ENCODE measurements at regions of chr12 and their contacts with region 1.

Region 1: DNA sequence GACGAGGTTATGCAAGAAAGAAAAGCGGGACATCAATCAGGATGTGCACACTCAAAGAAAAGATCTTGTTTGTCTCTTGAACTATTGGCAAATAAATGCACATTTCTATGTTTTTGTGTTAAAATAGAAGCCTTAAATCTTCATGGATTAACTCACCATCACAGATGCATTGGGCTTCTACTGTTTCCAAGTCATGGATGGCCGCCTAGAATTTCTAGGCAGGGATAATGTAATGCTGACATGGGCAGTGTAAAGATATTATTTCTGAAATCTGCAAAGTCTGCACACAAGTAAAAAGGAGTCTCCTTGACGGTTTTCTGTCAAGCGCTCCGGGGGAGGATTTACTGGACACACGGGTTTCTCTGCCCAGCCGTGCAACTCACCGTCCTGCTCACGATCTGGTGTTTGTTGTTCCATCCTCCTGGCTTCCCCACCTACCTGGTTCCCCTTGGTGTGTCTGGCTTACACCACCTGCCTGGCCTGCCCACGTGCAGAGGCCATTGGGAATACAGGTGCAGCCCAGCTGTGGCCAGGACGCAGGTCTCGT is 103.3 kb upstream of the FZD10 start:
- DNase-seq: no peak
- H3K4me3 ChIP-seq: no peak overlapping the region
- H3K27ac ChIP-seq: no peak overlapping the region
- H3K4me1 ChIP-seq: no peaks in the 10 kb centered on the region
- H3K27me3 ChIP-seq: no peaks in the 10 kb centered on the region
- CTCF ChIP-seq: no peak
- EP300 ChIP-seq: no peak
- POLR2A ChIP-seq: no peak

Region 2: GRCh38 chr12:130198026-130198662 is 139.1 kb after region 1 on chr12:
- in situ Hi-C with region 1: no loop called
- intact Hi-C with region 1: no loop called
- DNase-seq: no peak
- H3K4me3 ChIP-seq: no peak overlapping the region
- H3K27ac ChIP-seq: no peak overlapping the region
- H3K4me1 ChIP-seq: no peaks in the 10 kb centered on the region
- H3K27me3 ChIP-seq: no peaks in the 10 kb centered on the region
- CTCF ChIP-seq: no peak
- EP300 ChIP-seq: no peak
- POLR2A ChIP-seq: no peak

Region 3: DNA sequence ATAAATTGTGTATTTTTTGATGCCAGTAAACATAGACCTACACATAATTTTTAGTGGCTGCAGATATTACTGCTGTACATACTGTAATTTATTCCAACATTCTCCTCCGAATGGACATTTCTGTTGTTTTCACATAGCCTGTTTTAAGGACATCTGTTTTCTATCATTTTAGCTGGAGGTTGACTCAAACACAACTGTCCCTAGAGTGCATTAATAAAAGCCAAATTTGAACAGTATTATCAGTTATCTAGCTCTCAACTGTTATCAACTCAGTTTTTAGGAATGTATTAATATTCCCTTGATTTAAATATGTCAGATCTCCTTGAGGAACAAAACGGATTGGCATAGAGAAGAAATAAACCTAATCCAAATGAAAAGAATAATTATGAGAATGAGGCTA is 261.5 kb after region 1 on chr12:
- in situ Hi-C with region 1: no loop called
- intact Hi-C with region 1: loop called (anchors 5 kb)
- DNase-seq: no peak
- H3K4me3 ChIP-seq: no peak overlapping the region
- H3K27ac ChIP-seq: no peak overlapping the region
- H3K4me1 ChIP-seq: no peaks in the 10 kb centered on the region
- H3K27me3 ChIP-seq: no peaks in the 10 kb centered on the region
- CTCF ChIP-seq: no peak
- EP300 ChIP-seq: no peak
- POLR2A ChIP-seq: no peak

Region 4: DNA sequence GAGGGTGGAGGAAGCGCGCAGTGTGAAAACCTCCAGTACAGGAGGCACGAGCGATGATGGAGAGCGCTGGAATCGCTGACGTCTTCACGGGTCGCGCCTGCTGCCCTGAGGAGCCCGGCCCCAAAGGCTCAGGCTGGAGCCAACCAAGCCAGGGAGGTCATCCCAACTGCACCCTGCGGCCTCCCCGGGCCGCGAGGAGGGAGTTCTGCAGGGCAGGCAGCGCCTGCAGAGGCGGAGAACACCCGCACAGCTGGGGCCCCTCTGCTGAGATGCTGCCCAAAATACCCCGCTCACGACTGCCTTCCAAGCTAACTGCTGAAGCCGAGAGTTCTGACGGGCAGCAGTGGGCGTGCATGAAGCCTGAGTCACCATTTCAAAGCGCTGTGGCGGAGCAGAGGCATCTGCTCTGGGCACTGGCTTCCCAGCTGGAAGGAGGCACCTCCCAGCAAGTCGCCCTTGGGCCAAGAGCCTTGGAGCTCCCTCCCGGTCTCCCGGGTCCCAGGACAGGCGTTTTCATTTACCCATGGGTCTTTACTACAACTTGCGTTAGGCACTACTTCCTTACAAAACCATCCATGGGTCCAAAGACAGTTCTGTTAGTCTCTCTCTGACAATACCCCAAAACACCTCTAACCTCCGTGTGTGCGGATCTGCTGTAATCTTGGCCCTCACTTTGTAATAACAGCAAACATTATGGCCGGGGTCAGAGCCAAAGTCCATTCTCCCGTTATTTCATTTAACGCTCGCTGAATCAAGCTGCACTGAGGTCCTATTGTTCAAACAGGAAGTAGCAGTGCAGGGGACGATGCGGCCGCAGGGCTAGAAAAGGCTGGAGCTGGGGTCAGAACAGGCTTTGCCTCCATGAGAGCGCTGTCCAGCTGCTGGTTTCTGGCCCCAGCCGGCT is 717.2 kb after region 1 on chr12:
- in situ Hi-C with region 1: no loop called
- intact Hi-C with region 1: no loop called
- DNase-seq: peak; percentile 29
- H3K4me3 ChIP-seq: peak overlapping the region in 3 of 4 donors; percentile 2 to 39 (median 3)
- H3K27ac ChIP-seq: peak overlapping the region in 1 of 4 donors; percentile 12
- H3K4me1 ChIP-seq: peaks cover 0 to 14% (median 12%) of the 10 kb centered on the region in 4 donors
- H3K27me3 ChIP-seq: peaks cover 8% of the 10 kb centered on the region
- CTCF ChIP-seq: no peak
- EP300 ChIP-seq: no peak
- POLR2A ChIP-seq: no peak

Region 5: GRCh38 chr12:131142891-131143657 is 1084.1 kb after region 1 on chr12:
- in situ Hi-C with region 1: no loop called
- intact Hi-C with region 1: no loop called
- DNase-seq: no peak
- H3K4me3 ChIP-seq: no peak overlapping the region
- H3K27ac ChIP-seq: no peak overlapping the region
- H3K4me1 ChIP-seq: no peaks in the 10 kb centered on the region
- H3K27me3 ChIP-seq: no peaks in the 10 kb centered on the region
- CTCF ChIP-seq: no peak
- EP300 ChIP-seq: no peak
- POLR2A ChIP-seq: no peak